Activated T-helper 2 cell treated with anti-CD3 and anti-CD28 coated beads, Interferon-gamma antibody, Interleukin-2, Interleukin-4, amounts not matched to agents 10 μg/mL and 5 μg/mL and 100 μg/mL, durations not matched to agents 14 hours and 24 hours and 36 hours (primary cell): ENCODE measurements at regions of chr14 and their contacts with region 1.

Region 1: GRCh38 chr14:36217732-36218131 is 41.2 kb upstream of the PTCSC3 start:
- DNase-seq: no peak
- H3K4me3 Mint-ChIP-seq: no peak overlapping the region
- H3K27ac Mint-ChIP-seq: peak overlapping the region; percentile 15
- H3K4me1 Mint-ChIP-seq: peaks cover 13% of the 10 kb centered on the region
- H3K27me3 Mint-ChIP-seq: peaks cover 2% of the 10 kb centered on the region

Region 2: GRCh38 chr14:36271939-36272907 is 54.5 kb after region 1 on chr14:
- intact Hi-C with region 1: loop called (anchors 10 kb)
- DNase-seq: no peak
- H3K4me3 Mint-ChIP-seq: peak overlapping the region; percentile 67
- H3K27ac Mint-ChIP-seq: no peak overlapping the region
- H3K4me1 Mint-ChIP-seq: peaks cover 8% of the 10 kb centered on the region
- H3K27me3 Mint-ChIP-seq: peaks cover 50% of the 10 kb centered on the region

Region 3: DNA sequence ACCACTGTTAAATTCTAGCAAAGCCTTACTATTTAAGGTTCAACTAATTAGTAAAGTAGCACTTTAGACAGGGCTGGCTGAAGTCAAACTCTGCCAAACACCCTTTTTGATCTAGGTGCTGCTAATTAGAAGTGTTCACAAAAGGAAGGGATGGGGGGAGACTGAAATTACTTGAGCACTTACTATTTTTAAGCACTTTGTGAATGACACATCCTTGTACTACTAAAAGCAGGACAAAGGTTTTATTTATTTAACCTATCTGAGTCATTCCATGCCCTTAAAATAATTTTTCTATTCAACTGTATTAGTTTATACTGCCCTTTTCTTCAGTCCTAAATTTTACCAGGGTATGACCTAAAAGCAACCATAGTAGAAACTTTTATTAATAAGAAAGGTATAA is 82.6 kb after region 1 on chr14:
- intact Hi-C with region 1: no loop called
- DNase-seq: no peak
- H3K4me3 Mint-ChIP-seq: no peak overlapping the region
- H3K27ac Mint-ChIP-seq: no peak overlapping the region
- H3K4me1 Mint-ChIP-seq: peaks cover 3% of the 10 kb centered on the region
- H3K27me3 Mint-ChIP-seq: no peaks in the 10 kb centered on the region

Region 4: GRCh38 chr14:36315159-36315853 is 97.6 kb after region 1 on chr14:
- intact Hi-C with region 1: loop called (anchors 5 kb)
- DNase-seq: no peak
- H3K4me3 Mint-ChIP-seq: no peak overlapping the region
- H3K27ac Mint-ChIP-seq: peak overlapping the region; percentile 82
- H3K4me1 Mint-ChIP-seq: peaks cover 33% of the 10 kb centered on the region
- H3K27me3 Mint-ChIP-seq: no peaks in the 10 kb centered on the region